RWPE1 (cell line): ENCODE measurements at regions of chr12 and their contacts with region 1.

Region 1: GRCh38 chr12:117018276-117018675 is 80.9 kb downstream of the TESC start:
- DNase-seq: no peak
- H3K27ac ChIP-seq: no peak overlapping the region
- CTCF ChIP-seq: no peak

Region 2: GRCh38 chr12:117067016-117067415 is 48.7 kb after region 1 on chr12:
- CTCF ChIA-PET with region 1: interaction called, 11 read pairs
- POLR2A ChIA-PET with region 1: no interaction called
- DNase-seq: no peak
- H3K27ac ChIP-seq: no peak overlapping the region
- CTCF ChIP-seq: no peak

Region 3: GRCh38 chr12:117202556-117202955 is 184.3 kb after region 1 on chr12:
- CTCF ChIA-PET with region 1: no interaction called
- POLR2A ChIA-PET with region 1: interaction called, 11 read pairs
- DNase-seq: no peak
- H3K27ac ChIP-seq: no peak overlapping the region
- CTCF ChIP-seq: no peak